Kidney (tissue), 22 donors: ENCODE measurements at regions of chr14 and their contacts with region 1.

Region 1: DNA sequence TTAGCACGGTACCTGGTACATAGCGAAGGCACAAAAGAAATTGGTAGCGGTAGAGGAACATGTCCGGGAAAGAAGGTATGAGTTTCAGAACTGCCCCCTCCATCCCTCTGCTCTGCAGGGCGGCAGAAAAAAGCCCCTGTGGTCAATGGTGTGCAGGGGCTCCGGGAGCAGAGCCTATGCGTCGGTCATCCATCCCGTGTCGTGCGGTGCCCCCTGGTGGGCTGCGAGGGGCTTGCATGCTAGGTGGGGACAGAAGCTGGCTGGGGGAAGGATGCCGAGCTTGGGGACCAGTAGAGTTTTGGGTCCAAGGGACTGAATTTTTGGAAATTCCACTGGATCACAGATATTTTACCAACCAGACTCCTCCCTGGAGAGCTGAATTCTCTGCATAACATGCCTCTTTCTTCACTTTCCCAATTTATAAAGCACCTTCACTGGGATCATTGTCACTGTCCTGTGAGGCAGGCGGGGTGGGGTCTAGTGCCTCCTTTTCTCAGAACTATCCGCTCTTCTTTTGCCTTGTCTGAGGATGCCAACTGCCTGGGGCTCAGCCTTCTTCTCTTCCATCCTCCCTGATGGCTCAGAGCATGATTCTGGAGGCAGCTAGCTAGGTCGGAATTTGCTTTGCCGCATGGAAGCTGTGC is 148.7 kb downstream of the SMOC1 start:
- DNase-seq: peak; percentile 63 to 88 (median 81)
- H3K4me3 ChIP-seq: no peak overlapping the region
- H3K27ac ChIP-seq: no peak overlapping the region
- H3K4me1 ChIP-seq: no peaks in the 10 kb centered on the region
- H3K27me3 ChIP-seq: no peaks in the 10 kb centered on the region
- CTCF ChIP-seq: peak; percentile 96

Region 2: GRCh38 chr14:69818757-69819191 is 209.1 kb before region 1 on chr14:
- intact Hi-C with region 1: loop called (anchors 5 kb)
- DNase-seq: peak in 4 of 5 donors; percentile 66 to 80 (median 76)
- H3K4me3 ChIP-seq: no peak overlapping the region
- H3K27ac ChIP-seq: no peak overlapping the region
- H3K4me1 ChIP-seq: no peaks in the 10 kb centered on the region
- H3K27me3 ChIP-seq: no peaks in the 10 kb centered on the region
- CTCF ChIP-seq: peak; percentile 97